ENCODE measurements at regions of chr2 and their contacts with region 1.

Region 1: DNA sequence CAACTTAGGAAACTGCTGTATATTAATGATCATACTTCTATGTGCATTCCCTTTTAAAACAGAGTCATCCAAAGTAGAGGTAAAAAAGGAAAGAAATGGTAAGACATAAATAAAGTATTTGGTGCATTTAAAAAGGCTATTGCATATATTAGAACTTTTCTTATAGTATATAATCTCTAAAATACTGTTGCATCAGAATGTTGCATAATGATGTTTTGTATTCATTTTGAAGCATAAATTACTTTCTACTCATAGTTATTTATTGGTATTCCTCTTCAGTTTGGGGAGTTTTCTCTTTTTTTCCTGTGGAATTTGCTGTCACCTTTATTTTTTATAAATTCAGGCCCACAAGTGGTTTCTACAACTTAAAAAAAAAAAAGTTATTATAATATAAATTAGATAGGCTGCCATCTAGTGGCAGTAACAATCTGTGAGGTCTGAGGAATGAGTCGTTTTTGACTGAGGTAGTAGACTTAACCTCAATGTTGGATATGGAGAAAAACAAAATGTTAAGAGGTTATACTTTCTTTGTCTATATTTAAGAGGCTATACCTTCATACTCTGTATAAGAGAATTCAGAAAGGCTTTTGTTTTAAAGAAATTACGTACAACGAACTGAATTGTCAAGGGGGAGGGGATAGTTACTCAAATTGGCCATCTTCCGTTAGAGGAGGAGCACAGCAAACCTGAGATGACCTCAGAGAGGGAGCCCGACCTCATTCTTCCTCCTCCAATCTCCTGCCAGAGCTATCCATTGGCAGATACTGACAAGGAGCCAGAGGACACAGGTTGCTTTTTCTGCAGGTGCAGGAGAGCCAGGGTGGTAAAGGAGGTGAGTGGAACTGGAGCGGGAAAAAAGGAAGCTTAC is 23.8 kb downstream of the ANKAR start:
- DNase-seq: peak; percentile 58
- ATAC-seq: peak; percentile 55
- H3K4me3 Mint-ChIP-seq: no peak overlapping the region
- H3K27ac Mint-ChIP-seq: no peak overlapping the region
- H3K4me1 Mint-ChIP-seq: peaks cover 2% of the 10 kb centered on the region
- H3K27me3 Mint-ChIP-seq: no peaks in the 10 kb centered on the region
- CTCF ChIP-seq: peak; percentile 77

Region 2: DNA sequence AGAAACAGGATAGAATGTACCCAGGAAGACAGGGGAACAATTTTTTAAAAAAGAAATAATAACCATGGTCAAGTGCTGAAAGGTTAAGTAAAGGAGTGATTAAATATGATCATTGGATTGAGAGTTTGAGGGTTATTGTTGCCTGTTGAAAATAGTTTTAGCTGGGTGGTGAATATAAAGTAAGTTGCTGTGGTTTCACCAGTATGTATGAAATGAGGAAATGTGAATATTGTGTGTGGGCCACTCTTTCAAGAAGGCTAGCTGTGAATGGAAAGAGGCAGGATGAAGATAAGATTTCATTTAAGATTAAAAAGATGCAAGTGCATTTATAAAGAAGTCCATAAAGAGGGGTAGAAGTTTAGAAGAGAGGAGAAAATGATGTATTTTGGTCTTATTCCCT is 1352.8 kb before region 1 on chr2:
- CTCF ChIA-PET with region 1: no interaction called
- POLR2A ChIA-PET with region 1: no interaction called
- intact Hi-C with region 1: no loop called
- DNase-seq: no peak
- ATAC-seq: no peak
- H3K4me3 Mint-ChIP-seq: no peak overlapping the region
- H3K27ac Mint-ChIP-seq: no peak overlapping the region
- H3K4me1 Mint-ChIP-seq: no peaks in the 10 kb centered on the region
- H3K27me3 Mint-ChIP-seq: peaks cover 1% of the 10 kb centered on the region
- CTCF ChIP-seq: no peak

Region 3: GRCh38 chr2:188853307-188853706 is 844.9 kb before region 1 on chr2:
- CTCF ChIA-PET with region 1: no interaction called
- POLR2A ChIA-PET with region 1: no interaction called
- intact Hi-C with region 1: no loop called
- DNase-seq: no peak
- ATAC-seq: no peak
- H3K4me3 Mint-ChIP-seq: no peak overlapping the region
- H3K27ac Mint-ChIP-seq: no peak overlapping the region
- H3K4me1 Mint-ChIP-seq: no peaks in the 10 kb centered on the region
- H3K27me3 Mint-ChIP-seq: no peaks in the 10 kb centered on the region
- CTCF ChIP-seq: no peak

Region 4: GRCh38 chr2:189674374-189675112 is 23.7 kb before region 1 on chr2 and contains the start of gene ANKAR:
- CTCF ChIA-PET with region 1: interaction called, 15 read pairs
- POLR2A ChIA-PET with region 1: interaction called, 4 read pairs
- intact Hi-C with region 1: no loop called
- DNase-seq: peak; percentile 82
- ATAC-seq: peak; percentile 93
- H3K4me3 Mint-ChIP-seq: peak within 1 kb of the TSS; percentile 89
- H3K27ac Mint-ChIP-seq: peak within 1 kb of the TSS; percentile 96
- H3K4me1 Mint-ChIP-seq: peaks cover 28% of the 10 kb centered on the region
- H3K27me3 Mint-ChIP-seq: no peaks in the 10 kb centered on the region
- CTCF ChIP-seq: peak; percentile 76
- total RNA-seq, gene ANKAR: 3.5 to 3.6 TPM

Region 5: GRCh38 chr2:189685540-189686229 is 12.6 kb before region 1 on chr2:
- CTCF ChIA-PET with region 1: interaction called, 27 read pairs
- POLR2A ChIA-PET with region 1: interaction called, 5 read pairs
- intact Hi-C with region 1: no loop called
- DNase-seq: peak; percentile 47
- ATAC-seq: no peak
- H3K4me3 Mint-ChIP-seq: no peak overlapping the region
- H3K27ac Mint-ChIP-seq: no peak overlapping the region
- H3K4me1 Mint-ChIP-seq: peaks cover 33% of the 10 kb centered on the region
- H3K27me3 Mint-ChIP-seq: no peaks in the 10 kb centered on the region
- CTCF ChIP-seq: no peak

Region 6: GRCh38 chr2:189709501-189710221 is 11.4 kb after region 1 on chr2:
- CTCF ChIA-PET with region 1: interaction called, 13 read pairs
- POLR2A ChIA-PET with region 1: no interaction called
- intact Hi-C with region 1: no loop called
- DNase-seq: no peak
- ATAC-seq: no peak
- H3K4me3 Mint-ChIP-seq: no peak overlapping the region
- H3K27ac Mint-ChIP-seq: no peak overlapping the region
- H3K4me1 Mint-ChIP-seq: no peaks in the 10 kb centered on the region
- H3K27me3 Mint-ChIP-seq: no peaks in the 10 kb centered on the region
- CTCF ChIP-seq: no peak

Measured in activated CD8-positive, alpha-beta T cell treated with anti-CD3 and anti-CD28 coated beads for 36 hours (primary cell).